ENCODE measurements at regions of chr2 and their contacts with region 1.

Region 1: GRCh38 chr2:239230318-239231052 is 170.3 kb downstream of the HDAC4 start:
- DNase-seq: no peak
- ATAC-seq: no peak
- H3K4me3 ChIP-seq: no peak overlapping the region
- H3K27ac ChIP-seq: no peak overlapping the region
- H3K4me1 ChIP-seq: no peaks in the 10 kb centered on the region; the same call in 1 of the 2 replicates
- H3K27me3 ChIP-seq: no peaks in the 10 kb centered on the region
- CTCF ChIP-seq: no peak

Region 2: DNA sequence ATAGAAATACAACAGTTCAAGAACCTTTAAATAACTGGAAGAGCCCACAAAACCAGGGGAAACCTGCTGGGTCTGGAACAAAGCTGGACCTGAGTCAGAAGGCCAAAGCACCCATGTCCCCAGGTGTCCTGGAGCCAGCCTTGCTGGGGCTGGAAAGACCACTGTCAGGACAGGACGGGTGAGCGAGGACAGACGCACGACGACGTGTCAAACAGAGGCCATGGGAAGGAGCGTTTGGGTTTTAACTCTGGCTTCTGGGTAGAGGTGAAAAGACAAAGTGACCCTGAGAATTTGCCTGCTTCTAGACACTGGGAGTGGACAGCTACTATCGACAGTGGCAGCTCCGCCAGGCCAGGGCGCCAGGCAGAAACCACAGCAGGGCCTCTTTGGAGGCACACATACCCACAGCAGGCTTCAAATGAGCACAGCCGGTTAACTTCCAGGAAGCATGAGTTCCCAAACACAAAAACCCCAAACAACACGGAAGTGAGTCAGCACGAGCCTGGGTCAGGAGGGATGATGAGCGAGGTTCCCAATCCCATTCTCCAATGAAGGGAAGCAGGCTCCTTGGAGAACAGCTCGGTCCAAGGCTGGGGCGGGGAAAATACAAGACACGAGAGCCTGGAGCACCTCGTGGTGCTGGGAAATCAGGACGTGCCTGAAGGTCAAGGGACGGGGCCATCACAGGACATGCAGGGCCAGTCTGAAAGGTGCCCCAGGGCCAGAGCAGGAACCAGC is 174.6 kb before region 1 on chr2:
- CTCF ChIA-PET with region 1: interaction called, 10 read pairs
- POLR2A ChIA-PET with region 1: no interaction called
- in situ Hi-C with region 1: no loop called
- intact Hi-C with region 1: no loop called
- DNase-seq: no peak
- ATAC-seq: no peak
- H3K4me3 ChIP-seq: no peak overlapping the region
- H3K27ac ChIP-seq: no peak overlapping the region
- H3K4me1 ChIP-seq: no peaks in the 10 kb centered on the region
- H3K27me3 ChIP-seq: no peaks in the 10 kb centered on the region
- CTCF ChIP-seq: no peak

Region 3: DNA sequence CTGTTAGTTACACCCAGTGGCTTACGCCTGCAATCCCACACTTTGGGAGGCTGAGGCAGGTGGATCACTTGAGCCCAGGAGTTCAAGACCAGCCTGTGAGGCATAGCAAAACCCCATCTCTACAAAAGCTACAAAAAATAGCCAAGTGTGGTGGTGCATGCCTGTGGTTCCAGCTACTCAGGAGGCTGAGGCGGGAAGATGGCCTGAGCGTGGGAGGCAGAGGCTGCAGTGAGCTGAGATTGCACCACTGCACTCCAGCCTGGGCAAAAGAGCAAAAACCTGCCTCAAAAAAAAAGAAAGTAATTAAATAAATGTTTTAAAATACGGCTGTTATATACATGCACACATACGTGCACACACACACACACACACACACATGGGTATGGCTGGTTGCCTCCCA is 24.4 kb before region 1 on chr2:
- CTCF ChIA-PET with region 1: no interaction called
- POLR2A ChIA-PET with region 1: interaction called, 10 read pairs
- in situ Hi-C with region 1: no loop called
- intact Hi-C with region 1: no loop called
- DNase-seq: no peak
- ATAC-seq: no peak
- H3K4me3 ChIP-seq: no peak overlapping the region
- H3K27ac ChIP-seq: no peak overlapping the region
- H3K4me1 ChIP-seq: no peaks in the 10 kb centered on the region
- H3K27me3 ChIP-seq: no peaks in the 10 kb centered on the region
- CTCF ChIP-seq: no peak